GM12878 (cell line): ENCODE measurements at regions of chr12 and their contacts with region 1.

Region 1: GRCh38 chr12:56581418-56582145 is 48.5 kb downstream of the BAZ2A start:
- DNase-seq: peak; percentile 35
- ATAC-seq: peak; percentile 88
- H3K4me3 ChIP-seq: no peak overlapping the region
- H3K27ac ChIP-seq: no peak overlapping the region
- H3K4me1 ChIP-seq: no peaks in the 10 kb centered on the region
- H3K27me3 ChIP-seq: no peaks in the 10 kb centered on the region
- CTCF ChIP-seq: no peak
- EP300 ChIP-seq: no peak
- POLR2A ChIP-seq: no peak
- RAD21 ChIP-seq: no peak

Region 2: DNA sequence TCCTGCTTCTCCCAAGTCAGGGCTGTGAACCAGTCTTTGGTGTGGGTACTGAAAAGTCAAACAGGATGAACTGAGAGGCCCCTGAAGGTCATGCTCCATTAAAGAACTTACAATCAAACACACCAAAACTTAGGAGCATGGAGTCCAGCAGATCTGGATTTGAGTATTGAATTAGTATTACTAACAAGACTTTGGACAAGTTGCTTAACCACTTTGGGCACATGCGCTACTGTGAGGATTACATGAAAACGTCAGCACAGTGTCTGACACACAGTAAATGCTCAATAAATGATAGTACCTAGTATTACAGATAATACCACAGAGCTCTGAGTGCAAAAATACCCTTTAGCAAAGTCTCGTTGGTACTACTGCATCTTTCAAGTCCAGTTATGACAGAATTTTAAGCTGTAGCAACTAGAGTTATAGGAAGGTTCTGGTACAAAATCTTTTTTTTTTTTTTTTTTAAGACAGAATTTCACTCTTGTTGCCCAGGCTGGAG is 155.6 kb before region 1 on chr12:
- CTCF ChIA-PET with region 1: no interaction called
- POLR2A ChIA-PET with region 1: no interaction called
- RAD21 ChIA-PET with region 1: no interaction called
- SMC1A ChIA-PET with region 1: no interaction called
- in situ Hi-C with region 1: no loop called
- intact Hi-C with region 1: no loop called
- DNase-seq: no peak
- ATAC-seq: no peak
- H3K4me3 ChIP-seq: no peak overlapping the region
- H3K27ac ChIP-seq: no peak overlapping the region
- H3K4me1 ChIP-seq: no peaks in the 10 kb centered on the region
- H3K27me3 ChIP-seq: no peaks in the 10 kb centered on the region
- CTCF ChIP-seq: no peak
- EP300 ChIP-seq: no peak
- POLR2A ChIP-seq: no peak
- RAD21 ChIP-seq: no peak

Region 3: DNA sequence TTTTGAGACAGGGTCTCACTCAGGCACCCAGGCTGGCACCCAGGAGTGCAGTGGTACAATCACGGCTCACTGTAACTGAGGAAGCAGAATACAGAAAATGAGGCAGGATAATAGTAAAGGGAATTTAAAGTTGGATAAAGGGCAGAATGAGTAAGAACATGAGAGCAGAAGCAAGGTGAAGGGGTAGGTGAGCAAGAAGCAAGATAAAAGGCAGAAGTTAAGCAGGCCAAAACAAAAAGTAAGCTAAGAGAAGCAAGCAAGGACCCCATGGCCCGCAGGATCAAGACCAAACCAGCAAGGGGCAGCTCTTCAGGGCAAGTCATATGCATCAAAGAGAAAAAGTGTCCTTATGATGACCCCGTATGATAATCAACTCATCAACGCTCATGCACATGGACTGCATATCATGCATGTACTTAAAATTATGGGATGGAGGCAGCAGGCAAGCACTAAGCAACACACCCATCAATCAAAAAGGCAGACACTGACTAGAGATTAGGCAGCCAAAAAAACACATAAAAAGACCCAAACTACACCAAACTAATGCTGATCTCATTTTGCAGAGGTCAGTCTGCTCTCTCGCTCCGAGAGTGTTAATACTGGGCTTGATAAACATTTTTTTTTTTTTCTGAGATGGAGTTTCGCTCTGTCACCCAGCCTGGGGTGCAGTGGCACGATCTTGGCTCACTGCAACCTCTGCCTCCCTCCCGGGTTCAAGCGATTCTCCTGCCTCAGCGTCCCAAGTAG is 144.0 kb before region 1 on chr12:
- CTCF ChIA-PET with region 1: no interaction called
- POLR2A ChIA-PET with region 1: no interaction called
- RAD21 ChIA-PET with region 1: no interaction called
- SMC1A ChIA-PET with region 1: no interaction called
- in situ Hi-C with region 1: no loop called
- intact Hi-C with region 1: no loop called
- DNase-seq: no peak
- ATAC-seq: no peak
- H3K4me3 ChIP-seq: no peak overlapping the region
- H3K27ac ChIP-seq: no peak overlapping the region
- H3K4me1 ChIP-seq: no peaks in the 10 kb centered on the region
- H3K27me3 ChIP-seq: no peaks in the 10 kb centered on the region
- CTCF ChIP-seq: no peak
- EP300 ChIP-seq: no peak
- POLR2A ChIP-seq: no peak
- RAD21 ChIP-seq: no peak

Region 4: GRCh38 chr12:56565510-56566101 is 16.0 kb before region 1 on chr12:
- CTCF ChIA-PET with region 1: interaction called, 7 read pairs
- POLR2A ChIA-PET with region 1: interaction called, 3 read pairs
- RAD21 ChIA-PET with region 1: no interaction called
- SMC1A ChIA-PET with region 1: interaction called, 10 read pairs
- in situ Hi-C with region 1: no loop called
- intact Hi-C with region 1: no loop called
- DNase-seq: no peak
- ATAC-seq: peak; percentile 84
- H3K4me3 ChIP-seq: peak overlapping the region; percentile 30; the same call in 1 of the 2 replicates
- H3K27ac ChIP-seq: no peak overlapping the region
- H3K4me1 ChIP-seq: peaks cover 10% of the 10 kb centered on the region
- H3K27me3 ChIP-seq: no peaks in the 10 kb centered on the region
- CTCF ChIP-seq: no peak
- EP300 ChIP-seq: no peak
- POLR2A ChIP-seq: no peak
- RAD21 ChIP-seq: no peak

Region 5: DNA sequence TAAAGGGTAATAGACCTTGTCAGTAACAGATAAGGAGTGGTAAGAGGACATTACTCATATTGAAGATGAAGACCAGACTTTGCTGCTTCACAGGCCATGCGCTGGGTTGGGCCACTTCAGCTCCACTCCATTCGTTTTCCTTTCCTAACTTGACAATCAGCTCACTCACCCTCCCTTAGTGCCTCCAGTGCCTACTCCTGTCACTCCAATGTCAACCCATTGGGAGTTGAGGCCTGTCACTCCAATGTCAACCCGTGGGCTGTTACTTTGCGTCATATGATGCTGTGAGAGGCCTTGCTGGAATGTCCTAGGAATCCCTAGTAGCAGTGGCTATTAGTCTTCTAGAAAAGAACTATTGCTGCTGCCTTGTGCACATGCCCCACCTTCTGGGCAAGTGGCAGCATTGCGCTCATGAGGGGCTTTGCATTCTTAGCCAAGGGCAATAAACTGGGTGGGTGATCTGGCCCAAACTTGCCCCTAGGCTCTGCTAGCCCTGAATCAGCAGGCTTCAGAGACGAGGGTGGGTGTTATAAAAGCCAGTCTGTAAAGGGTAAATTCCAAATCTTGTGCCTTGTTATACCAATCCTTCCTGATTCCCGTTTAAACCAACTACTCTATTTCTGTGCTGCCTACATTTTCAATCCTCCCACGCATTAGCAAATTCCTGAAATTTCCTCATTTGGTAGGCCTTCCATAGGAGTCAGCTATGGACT is 12.5 kb after region 1 on chr12:
- CTCF ChIA-PET with region 1: interaction called, 27 read pairs
- POLR2A ChIA-PET with region 1: interaction called, 6 read pairs
- RAD21 ChIA-PET with region 1: no interaction called
- SMC1A ChIA-PET with region 1: interaction called, 3 read pairs
- in situ Hi-C with region 1: no loop called
- intact Hi-C with region 1: no loop called
- DNase-seq: no peak
- ATAC-seq: peak; percentile 80
- H3K4me3 ChIP-seq: no peak overlapping the region
- H3K27ac ChIP-seq: no peak overlapping the region
- H3K4me1 ChIP-seq: no peaks in the 10 kb centered on the region; the same call in 1 of the 2 replicates
- H3K27me3 ChIP-seq: no peaks in the 10 kb centered on the region
- CTCF ChIP-seq: peak; percentile 83 to 94 (median 91)
- EP300 ChIP-seq: no peak
- POLR2A ChIP-seq: 0 out of 2 replicates have a peak, but pooled peaks have one; percentile 35
- RAD21 ChIP-seq: peak; percentile 88

Region 6: GRCh38 chr12:56720731-56721151 is 139.2 kb after region 1 on chr12:
- CTCF ChIA-PET with region 1: no interaction called
- POLR2A ChIA-PET with region 1: no interaction called
- RAD21 ChIA-PET with region 1: no interaction called
- SMC1A ChIA-PET with region 1: no interaction called
- in situ Hi-C with region 1: no loop called
- intact Hi-C with region 1: no loop called
- DNase-seq: no peak
- ATAC-seq: no peak
- H3K4me3 ChIP-seq: peak overlapping the region; percentile 97
- H3K27ac ChIP-seq: peak overlapping the region; percentile 46; the same call in 1 of the 2 replicates
- H3K4me1 ChIP-seq: peaks cover 42% of the 10 kb centered on the region
- H3K27me3 ChIP-seq: no peaks in the 10 kb centered on the region
- CTCF ChIP-seq: no peak
- EP300 ChIP-seq: no peak
- POLR2A ChIP-seq: no peak
- RAD21 ChIP-seq: no peak